ENCODE measurements at regions of chr14 and their contacts with region 1.

Region 1: DNA sequence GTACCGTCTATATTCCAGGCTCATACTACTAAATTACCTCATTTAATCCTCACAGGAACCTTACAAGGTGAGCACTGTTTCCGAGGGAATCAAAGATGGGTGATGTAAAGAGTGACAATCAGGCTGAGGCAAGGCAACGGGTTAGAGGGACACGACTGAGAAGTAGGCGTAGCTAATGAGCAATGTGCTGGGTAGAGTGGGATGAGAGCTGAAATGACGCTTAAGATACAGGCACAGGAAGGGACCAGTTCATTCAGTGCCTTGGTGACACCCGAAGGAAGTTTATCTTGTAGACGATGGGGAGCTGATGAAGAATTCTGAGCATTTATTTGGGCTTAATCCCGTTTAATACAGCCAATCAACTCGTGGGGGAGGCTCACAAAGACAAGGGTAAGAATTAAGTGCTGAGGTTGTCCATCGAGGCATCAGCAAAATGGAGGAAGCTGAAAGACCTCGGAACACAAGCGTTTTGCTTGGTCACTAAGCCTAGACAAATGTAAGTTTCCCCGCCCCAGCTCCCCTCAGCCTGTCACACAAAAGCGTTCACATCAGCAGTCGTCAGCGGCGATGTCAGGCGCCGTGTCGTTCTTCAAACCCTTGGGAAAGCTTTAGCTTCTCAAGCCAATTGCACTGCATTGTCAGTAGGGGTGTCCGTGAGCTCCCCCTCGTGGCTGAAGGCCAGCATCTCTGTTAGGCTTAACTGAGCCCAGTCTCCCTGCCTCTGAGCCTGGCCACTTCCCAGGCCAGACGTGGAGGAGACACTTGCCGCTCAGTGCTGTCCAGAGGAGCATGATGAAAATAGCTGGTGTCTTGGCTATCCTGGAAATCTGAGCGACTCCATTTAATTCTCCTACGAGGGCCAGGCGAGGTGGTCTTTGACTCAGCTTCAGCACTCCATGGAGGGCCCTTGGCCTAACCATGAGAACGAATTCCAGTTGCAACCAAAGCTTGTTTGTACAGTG is 288.5 kb upstream of the G2E3 start:
- DNase-seq: peak; percentile 48 to 96 (median 82)

Region 2: DNA sequence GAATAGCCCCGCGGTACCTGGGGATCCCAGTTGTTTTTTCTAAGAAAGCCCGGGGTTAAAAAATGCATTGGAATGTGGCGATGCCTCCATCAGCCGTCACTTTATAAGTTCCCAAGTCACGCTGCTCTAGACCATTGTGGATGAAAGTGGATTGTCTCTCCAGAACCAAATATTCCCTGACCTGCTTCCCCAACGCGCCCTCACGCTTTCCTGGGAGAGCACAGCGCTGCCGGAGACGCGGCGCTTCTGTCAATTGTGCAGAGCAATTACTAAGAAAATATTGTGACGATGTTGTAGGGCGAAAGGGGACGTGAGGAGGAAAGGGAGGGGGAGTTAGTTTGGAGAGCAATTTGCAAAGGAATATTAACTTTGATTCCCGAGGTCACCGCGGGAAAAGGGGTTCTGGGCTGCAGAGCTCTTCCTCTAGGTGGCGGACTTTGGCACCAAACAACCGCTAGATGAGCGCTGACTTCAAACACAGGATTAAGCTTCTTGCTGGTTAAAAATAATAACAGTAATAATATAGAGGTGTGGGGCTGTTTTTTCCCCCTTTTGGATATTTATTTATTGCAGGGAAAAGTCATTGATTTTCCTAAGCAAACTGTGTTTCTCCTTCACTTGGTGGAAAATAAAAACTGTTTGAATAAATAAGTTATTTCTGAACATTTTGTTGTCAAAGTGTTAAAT is 1513.5 kb before region 1 on chr14:
- intact Hi-C with region 1: loop called (anchors 5 kb)
- DNase-seq: peak in 4 of 10 donors; percentile 23 to 93 (median 55)

Region 3: DNA sequence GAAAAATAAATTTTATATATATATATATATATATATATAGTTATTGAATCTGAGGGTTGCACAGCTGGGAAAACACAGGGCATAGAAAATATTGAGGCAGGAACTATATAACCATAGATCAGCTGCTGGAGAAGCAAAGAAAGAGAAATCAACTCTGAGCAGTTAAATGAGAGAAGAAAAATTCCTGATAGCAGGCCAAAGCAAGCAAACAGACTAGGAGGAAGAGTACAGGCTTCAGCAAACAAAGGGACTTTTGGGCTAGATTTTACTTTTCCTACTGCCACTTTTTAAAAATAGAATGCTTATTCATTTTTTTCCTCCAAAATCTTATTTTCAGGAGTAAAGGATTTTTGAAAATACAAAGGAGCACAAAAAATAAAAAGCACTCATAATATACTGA is 126.9 kb before region 1 on chr14:
- intact Hi-C with region 1: no loop called
- DNase-seq: no peak

Region 4: DNA sequence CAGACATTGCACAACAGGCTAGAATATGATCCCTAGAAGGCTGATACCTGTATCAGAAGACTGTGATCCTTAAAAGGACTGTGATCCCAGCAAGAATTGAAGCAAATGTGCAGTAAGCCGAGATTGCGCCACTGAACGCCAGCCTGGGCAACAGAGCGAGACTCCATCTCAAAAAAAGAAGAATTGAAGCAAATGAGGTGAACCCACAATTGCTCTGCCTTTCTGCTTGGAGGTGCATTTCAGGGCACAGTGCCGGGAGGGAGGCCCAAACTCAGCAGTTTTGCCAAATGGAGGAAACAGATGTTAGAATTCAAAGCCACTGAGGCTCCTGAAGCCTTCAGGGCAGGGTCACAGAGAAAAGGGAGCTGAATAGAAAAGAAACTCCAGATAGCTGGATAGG is 542.7 kb after region 1 on chr14:
- intact Hi-C with region 1: no loop called
- DNase-seq: no peak

Measured in posterior cingulate gyrus (tissue), 11 donors.